MCF 10A (cell line): ENCODE measurements at regions of chr9 and their contacts with region 1.

Region 1: GRCh38 chr9:86997158-86997557 is 49.9 kb upstream of the GAS1 start:
- DNase-seq: peak; percentile 52
- H3K4me3 Mint-ChIP-seq: no peak overlapping the region
- H3K27ac Mint-ChIP-seq: no peak overlapping the region
- H3K4me1 Mint-ChIP-seq: peaks cover 10% of the 10 kb centered on the region
- H3K27me3 Mint-ChIP-seq: no peaks in the 10 kb centered on the region
- CTCF ChIP-seq: peak; percentile 41

Region 2: GRCh38 chr9:86614871-86615849 is 382.0 kb before region 1 on chr9:
- CTCF ChIA-PET with region 1: interaction called, 3 read pairs
- POLR2A ChIA-PET with region 1: no interaction called
- intact Hi-C with region 1: loop called (anchors 5 kb)
- DNase-seq: peak; percentile 55
- H3K4me3 Mint-ChIP-seq: no peak overlapping the region
- H3K27ac Mint-ChIP-seq: no peak overlapping the region
- H3K4me1 Mint-ChIP-seq: no peaks in the 10 kb centered on the region
- H3K27me3 Mint-ChIP-seq: no peaks in the 10 kb centered on the region
- CTCF ChIP-seq: peak; percentile 51

Region 3: DNA sequence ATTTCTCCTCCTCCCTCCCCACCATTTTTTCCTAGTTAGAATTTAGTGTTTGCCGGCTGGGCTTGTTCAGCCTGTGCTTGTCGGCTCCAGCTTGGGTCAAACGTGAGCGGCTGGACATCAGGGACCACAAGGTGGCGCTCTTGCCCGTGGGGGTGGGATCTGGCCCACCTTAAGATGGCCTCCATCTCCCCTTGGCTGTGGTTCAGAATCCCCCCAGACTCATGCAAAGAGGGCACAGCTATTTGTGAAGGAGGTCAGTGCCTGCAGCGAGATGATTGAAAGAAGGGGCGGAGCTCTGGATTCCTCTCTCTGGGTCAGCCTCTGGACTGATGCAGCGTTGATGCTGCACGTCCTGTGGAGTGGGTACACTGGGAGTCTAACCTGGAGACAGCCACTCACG is 359.6 kb before region 1 on chr9:
- CTCF ChIA-PET with region 1: interaction called, 3 read pairs
- POLR2A ChIA-PET with region 1: no interaction called
- intact Hi-C with region 1: loop called (anchors 5 kb)
- DNase-seq: peak; percentile 26
- H3K4me3 Mint-ChIP-seq: no peak overlapping the region
- H3K27ac Mint-ChIP-seq: no peak overlapping the region
- H3K4me1 Mint-ChIP-seq: no peaks in the 10 kb centered on the region
- H3K27me3 Mint-ChIP-seq: no peaks in the 10 kb centered on the region
- CTCF ChIP-seq: peak; percentile 77